Body of pancreas (tissue), 4 donors: ENCODE measurements at regions of chr10 and their contacts with region 1.

Region 1: GRCh38 chr10:70758757-70759514 is 26.2 kb downstream of the TBATA start:
- DNase-seq: peak; percentile 68 to 74 (median 70)
- ATAC-seq: peak; percentile 65
- H3K4me3 ChIP-seq: no peak overlapping the region
- H3K27ac ChIP-seq: no peak overlapping the region
- H3K4me1 ChIP-seq: no peaks in the 10 kb centered on the region
- H3K27me3 ChIP-seq: no peaks in the 10 kb centered on the region
- CTCF ChIP-seq: peak; percentile 46 to 84 (median 68)
- POLR2A ChIP-seq: no peak

Region 2: DNA sequence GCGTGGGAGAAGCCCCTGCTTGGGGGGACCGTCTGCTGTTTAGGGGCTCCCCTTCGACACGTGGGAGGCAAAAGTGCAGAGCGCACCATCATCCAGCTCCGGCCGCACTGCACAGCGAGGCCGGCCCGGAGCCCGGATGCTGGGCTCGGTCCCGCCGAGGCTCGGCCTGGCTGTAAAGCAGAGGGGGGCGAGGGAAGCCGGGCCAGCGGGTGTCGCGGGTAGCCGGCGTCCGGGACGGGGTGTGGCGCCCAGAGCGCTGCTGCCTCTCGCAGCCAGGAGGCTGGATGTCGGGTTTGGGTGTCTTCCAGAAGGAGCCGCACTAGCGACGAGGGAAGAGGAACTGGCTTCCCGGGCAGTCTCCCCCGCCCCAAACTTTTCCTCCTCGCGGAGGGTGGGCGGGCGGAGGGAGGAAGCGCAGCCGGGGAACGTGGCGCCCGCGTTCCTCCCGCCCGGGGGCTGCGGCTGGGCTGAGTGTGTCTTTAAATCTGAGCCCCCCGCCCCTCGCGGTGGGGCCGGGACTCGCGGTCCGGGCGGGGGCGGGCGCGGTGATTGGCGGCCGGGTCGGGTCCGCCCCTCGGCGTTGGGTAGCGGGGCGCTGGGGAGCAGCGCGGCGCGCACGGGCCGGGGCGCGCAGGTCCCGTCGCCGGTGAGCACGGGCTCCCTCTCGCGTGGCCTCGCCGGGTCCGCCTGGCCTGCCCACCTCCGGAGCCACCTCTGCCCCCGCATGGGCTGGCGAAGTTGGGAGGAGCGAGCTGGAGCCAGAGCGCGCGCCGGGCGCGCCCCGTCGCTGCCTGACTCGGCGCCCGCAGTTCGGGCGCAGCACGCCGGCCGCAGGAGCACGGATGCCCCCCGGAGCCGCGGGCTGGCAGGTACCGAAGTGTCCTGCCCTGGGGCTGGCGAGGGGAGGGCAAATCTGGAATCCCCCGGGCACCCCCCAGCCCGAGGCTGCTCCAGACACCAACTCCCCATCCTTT is 280.5 kb before region 1 on chr10 and contains the start of gene PALD1:
- intact Hi-C with region 1: loop called (anchors 10 kb)
- DNase-seq: peak; percentile 37 to 71 (median 62)
- ATAC-seq: peak; percentile 50
- H3K4me3 ChIP-seq: peak within 1 kb of the TSS in 1 of 2 donors; percentile 33
- H3K27ac ChIP-seq: peak within 1 kb of the TSS; percentile 63 to 86 (median 72)
- H3K4me1 ChIP-seq: peaks cover 42% of the 10 kb centered on the region
- H3K27me3 ChIP-seq: no peaks in the 10 kb centered on the region
- CTCF ChIP-seq: peak in 4 of 7 experiments; percentile 8 to 51 (median 38)
- POLR2A ChIP-seq: peak in 2 of 3 donors; percentile 24 to 57
- total RNA-seq, gene PALD1: 4.9 to 11.7 TPM

Region 3: DNA sequence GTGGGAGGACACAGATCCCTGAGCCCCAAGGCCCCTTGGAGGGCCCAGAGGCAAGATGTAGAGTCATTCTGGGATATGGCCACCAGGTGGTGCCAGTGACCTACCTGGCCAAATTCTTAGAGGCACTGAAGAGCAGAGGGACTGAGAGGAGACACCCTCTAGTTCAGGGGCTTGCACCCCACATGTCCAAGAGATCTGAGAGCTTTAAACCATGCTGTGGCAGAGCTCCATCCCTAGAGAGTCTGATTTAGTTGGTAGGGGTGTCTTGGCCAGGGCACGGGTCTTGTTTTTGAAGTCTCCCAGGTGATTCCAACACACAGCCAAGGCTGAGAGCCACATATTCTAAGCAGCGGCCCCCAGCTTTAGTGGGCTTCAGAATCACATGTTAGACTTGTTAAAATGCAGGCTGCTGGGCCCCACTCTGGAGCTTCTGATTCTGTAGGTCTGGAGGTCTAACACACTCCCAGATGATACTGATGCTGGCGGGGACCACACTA is 208.9 kb before region 1 on chr10:
- intact Hi-C with region 1: loop called (anchors 5 kb)
- DNase-seq: peak; percentile 62 to 74 (median 68)
- ATAC-seq: peak; percentile 61
- H3K4me3 ChIP-seq: no peak overlapping the region
- H3K27ac ChIP-seq: no peak overlapping the region
- H3K4me1 ChIP-seq: no peaks in the 10 kb centered on the region
- H3K27me3 ChIP-seq: no peaks in the 10 kb centered on the region
- CTCF ChIP-seq: peak; percentile 67 to 84 (median 80)
- POLR2A ChIP-seq: no peak

Region 4: DNA sequence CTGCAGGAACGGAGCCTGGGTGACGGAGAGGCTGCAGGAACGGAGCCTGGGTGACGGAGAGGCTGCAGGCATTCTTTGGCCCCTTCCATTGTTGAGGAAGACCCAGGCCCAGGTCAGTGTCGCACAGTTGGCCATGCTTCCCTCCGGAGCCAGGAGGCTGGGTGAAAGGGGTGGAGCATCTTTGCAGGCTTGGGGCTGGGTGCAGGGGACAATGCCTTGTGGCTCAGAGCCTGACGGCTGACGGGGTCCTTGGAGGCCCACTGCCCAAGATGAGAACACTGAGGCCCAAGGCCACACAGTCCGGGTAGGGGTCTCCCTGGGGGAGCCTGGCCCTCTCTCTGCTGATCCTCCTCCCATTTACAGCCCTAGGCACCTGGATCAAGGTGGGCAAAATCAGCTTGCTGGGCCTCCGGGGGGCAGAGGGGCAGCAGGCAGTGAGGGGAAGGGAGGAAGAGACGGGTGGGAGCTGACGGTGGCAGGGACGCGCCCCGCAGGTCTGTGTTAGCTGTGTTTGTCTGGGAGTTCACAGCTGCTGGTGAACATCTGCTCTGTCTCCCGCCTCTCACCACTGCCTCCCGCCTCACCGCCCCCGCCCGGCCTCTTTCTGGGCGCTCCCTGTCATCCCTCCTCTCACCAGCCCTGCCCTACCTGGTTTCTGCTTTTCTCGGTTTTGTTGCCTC is 160.1 kb after region 1 on chr10:
- intact Hi-C with region 1: no loop called
- DNase-seq: peak in 1 of 4 donors; percentile 17
- ATAC-seq: no peak
- H3K4me3 ChIP-seq: no peak overlapping the region
- H3K27ac ChIP-seq: no peak overlapping the region
- H3K4me1 ChIP-seq: no peaks in the 10 kb centered on the region
- H3K27me3 ChIP-seq: no peaks in the 10 kb centered on the region
- CTCF ChIP-seq: no peak
- POLR2A ChIP-seq: no peak